ENCODE measurements at regions of chr11 and their contacts with region 1.

Region 1: GRCh38 chr11:67118801-67119584 is at the start of gene KDM2A:
- DNase-seq: peak; percentile 96
- H3K4me3 Mint-ChIP-seq: peak within 1 kb of the TSS; percentile 99
- H3K27ac Mint-ChIP-seq: peak within 1 kb of the TSS; percentile 93
- H3K4me1 Mint-ChIP-seq: peaks cover 17% of the 10 kb centered on the region
- H3K27me3 Mint-ChIP-seq: peaks cover 2% of the 10 kb centered on the region
- total RNA-seq, gene KDM2A: 96.0 and 107 TPM in 2 replicates

Region 2: GRCh38 chr11:67160874-67161783 is 42.1 kb after region 1 on chr11:
- intact Hi-C with region 1: loop called (anchors 5 kb)
- DNase-seq: no peak
- H3K4me3 Mint-ChIP-seq: no peak overlapping the region
- H3K27ac Mint-ChIP-seq: no peak overlapping the region
- H3K4me1 Mint-ChIP-seq: peaks cover 21% of the 10 kb centered on the region
- H3K27me3 Mint-ChIP-seq: no peaks in the 10 kb centered on the region

Region 3: DNA sequence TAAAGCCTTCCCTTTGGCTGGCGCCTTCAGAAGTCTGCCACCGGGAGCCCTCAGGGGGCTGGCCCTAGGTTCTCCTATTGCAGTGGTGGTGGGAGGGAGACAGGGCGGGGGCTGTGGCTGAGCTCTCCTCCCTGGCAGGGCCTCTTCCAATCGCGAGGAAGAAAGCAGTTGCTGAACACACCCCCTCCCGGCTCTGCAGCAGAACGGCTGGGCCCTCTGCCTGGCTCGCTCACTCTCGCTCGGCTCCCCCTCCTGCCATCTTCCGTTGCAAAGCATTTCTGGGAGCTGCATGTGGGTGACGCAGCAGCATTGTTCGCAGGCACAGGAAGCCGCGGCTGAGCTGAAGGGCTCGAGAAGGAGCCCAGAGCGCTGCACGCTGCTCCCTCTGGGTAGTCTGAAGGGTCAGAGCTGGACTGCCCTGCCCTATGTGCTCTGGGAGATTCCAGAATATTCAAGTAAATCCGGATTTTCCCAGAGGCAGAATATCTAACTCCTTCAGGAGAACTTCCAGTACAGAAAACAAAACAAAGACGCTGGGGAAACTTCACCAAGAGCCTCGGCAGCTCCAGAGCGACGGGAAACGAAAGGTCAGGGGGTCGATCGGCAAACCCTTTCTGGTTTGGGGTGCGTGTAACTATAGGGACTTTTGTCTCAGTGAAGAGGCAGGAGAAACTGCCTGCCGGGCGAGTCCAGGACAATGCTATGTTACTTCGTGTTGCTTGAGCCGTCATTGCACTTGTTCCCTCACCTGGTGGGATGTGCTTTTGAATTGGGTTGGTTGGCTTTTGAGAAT is 121.0 kb after region 1 on chr11:
- intact Hi-C with region 1: loop called (anchors 2 kb)
- DNase-seq: peak; percentile 97
- H3K4me3 Mint-ChIP-seq: peak overlapping the region; percentile 99
- H3K27ac Mint-ChIP-seq: peak overlapping the region; percentile 99
- H3K4me1 Mint-ChIP-seq: peaks cover 30% of the 10 kb centered on the region
- H3K27me3 Mint-ChIP-seq: no peaks in the 10 kb centered on the region

Region 4: DNA sequence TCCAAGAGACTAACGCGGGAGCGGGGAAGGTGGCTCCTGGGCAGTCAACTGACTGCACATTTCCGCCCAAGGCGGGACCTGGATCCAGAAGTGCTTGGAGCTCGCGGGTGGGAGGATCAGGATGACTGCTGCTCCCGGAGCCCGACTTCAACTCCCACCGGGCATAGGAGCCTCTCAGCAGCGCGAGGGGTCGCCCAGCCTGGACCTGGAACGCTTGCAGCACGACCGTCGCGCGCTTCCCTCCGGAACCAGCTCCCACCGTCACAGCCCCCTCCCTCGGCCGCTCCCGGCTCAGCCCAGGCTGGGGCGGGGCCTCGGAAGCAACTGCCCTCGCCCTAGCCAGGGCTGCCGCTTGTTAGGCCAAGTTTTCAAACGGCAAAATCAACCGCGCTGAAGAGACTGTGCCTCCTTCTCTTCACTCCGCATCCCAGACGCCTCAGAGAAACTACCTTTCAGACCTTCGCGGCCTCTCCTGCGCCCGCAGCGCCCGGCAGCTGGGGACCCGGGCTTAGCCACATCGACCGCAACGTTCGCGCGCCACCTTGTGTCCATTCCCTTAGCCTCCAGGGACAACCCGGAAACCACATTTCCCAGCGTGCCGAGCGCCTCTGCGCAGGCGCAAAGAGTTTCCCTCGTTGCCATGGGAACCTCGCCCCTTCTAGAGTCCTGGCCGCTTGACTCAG is 198.4 kb after region 1 on chr11:
- intact Hi-C with region 1: loop called (anchors 5 kb)
- DNase-seq: peak; percentile 98
- H3K4me3 Mint-ChIP-seq: peak overlapping the region; percentile 96
- H3K27ac Mint-ChIP-seq: peak overlapping the region; percentile 98
- H3K4me1 Mint-ChIP-seq: peaks cover 32% of the 10 kb centered on the region
- H3K27me3 Mint-ChIP-seq: peaks cover 3% of the 10 kb centered on the region

Measured in activated T-helper 2 cell treated with anti-CD3 and anti-CD28 coated beads, Interferon-gamma antibody, Interleukin-2, Interleukin-4, amounts not matched to agents 10 μg/mL and 5 μg/mL and 100 μg/mL, durations not matched to agents 14 hours and 24 hours and 36 hours (primary cell).